Activated CD8-positive, alpha-beta T cell treated with anti-CD3 and anti-CD28 coated beads for 36 hours (primary cell): ENCODE measurements at regions of chr11 and their contacts with region 1.

Region 1: DNA sequence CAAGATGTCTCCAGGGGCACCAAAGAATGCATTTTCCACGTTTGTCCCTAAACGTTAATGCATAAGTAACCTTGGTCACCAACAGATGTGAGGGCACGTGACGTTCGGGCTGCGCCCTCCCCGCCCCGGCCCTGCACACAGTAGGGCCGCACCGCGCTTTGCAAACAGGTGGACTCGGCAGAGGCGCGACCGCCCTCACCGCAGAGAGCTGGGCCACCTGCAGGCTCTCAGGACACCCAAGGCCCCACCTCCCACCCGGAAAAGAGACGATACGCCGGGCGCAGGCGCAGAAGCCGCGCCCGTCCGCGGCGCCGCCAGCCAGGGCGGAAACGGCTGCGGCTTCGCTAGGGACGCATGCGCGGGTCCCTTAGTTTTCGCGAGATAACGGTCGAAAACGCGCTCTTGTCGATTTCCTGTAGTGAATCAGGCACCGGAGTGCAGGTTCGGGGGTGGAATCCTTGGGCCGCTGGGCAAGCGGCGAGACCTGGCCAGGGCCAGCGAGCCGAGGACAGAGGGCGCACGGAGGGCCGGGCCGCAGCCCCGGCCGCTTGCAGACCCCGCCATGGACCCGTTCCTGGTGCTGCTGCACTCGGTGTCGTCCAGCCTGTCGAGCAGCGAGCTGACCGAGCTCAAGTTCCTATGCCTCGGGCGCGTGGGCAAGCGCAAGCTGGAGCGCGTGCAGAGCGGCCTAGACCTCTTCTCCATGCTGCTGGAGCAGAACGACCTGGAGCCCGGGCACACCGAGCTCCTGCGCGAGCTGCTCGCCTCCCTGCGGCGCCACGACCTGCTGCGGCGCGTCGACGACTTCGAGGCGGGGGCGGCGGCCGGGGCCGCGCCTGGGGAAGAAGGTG is at the start of gene FADD:
- DNase-seq: peak; percentile 94
- ATAC-seq: peak; percentile 74
- H3K4me3 Mint-ChIP-seq: peak within 1 kb of the TSS; percentile 97
- H3K27ac Mint-ChIP-seq: peak within 1 kb of the TSS; percentile 98
- H3K4me1 Mint-ChIP-seq: peaks cover 35% of the 10 kb centered on the region
- H3K27me3 Mint-ChIP-seq: peaks cover 1% of the 10 kb centered on the region
- CTCF ChIP-seq: no peak
- total RNA-seq, gene FADD: 27.6 to 29.6 TPM

Region 2: DNA sequence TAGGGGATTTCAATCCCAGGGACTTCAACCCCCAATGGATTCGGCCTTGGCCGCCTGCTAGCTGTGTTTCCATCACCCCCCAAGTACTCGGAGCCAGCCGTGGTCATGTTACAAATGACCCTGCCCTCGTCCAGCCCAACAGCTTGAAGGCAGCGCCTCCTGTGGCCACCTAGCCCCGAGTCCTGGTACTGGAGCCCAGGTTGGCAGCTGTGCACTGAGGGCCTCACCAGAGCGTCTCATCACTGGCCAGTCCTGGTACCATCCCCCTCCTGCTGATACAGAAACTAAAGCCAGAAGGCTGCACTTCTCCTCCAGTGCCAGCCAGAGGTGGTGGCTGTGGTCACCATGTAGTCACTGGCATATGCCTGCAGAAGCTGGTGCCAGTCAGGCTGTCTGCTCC is 44.9 kb before region 1 on chr11:
- CTCF ChIA-PET with region 1: no interaction called
- POLR2A ChIA-PET with region 1: no interaction called
- intact Hi-C with region 1: no loop called
- DNase-seq: no peak
- ATAC-seq: no peak
- H3K4me3 Mint-ChIP-seq: no peak overlapping the region
- H3K27ac Mint-ChIP-seq: no peak overlapping the region
- H3K4me1 Mint-ChIP-seq: no peaks in the 10 kb centered on the region
- H3K27me3 Mint-ChIP-seq: no peaks in the 10 kb centered on the region
- CTCF ChIP-seq: no peak

Region 3: GRCh38 chr11:70265341-70265740 is 62.2 kb after region 1 on chr11:
- CTCF ChIA-PET with region 1: no interaction called
- POLR2A ChIA-PET with region 1: interaction called, 4 read pairs
- intact Hi-C with region 1: loop called (anchors 10 kb)
- DNase-seq: no peak
- ATAC-seq: no peak
- H3K4me3 Mint-ChIP-seq: no peak overlapping the region
- H3K27ac Mint-ChIP-seq: no peak overlapping the region
- H3K4me1 Mint-ChIP-seq: peaks cover 3% of the 10 kb centered on the region
- H3K27me3 Mint-ChIP-seq: peaks cover 13% of the 10 kb centered on the region
- CTCF ChIP-seq: no peak